H1 (cell line): ENCODE measurements at regions of chr1 and their contacts with region 1.

Region 1: GRCh38 chr1:204763706-204764427 is 78.3 kb upstream of the LRRN2 start:
- DNase-seq: peak; percentile 77 to 89
- H3K4me3 ChIP-seq: no peak overlapping the region
- H3K27ac ChIP-seq: no peak overlapping the region
- H3K4me1 ChIP-seq: peaks cover 0 to 5% (median 2%) of the 10 kb centered on the region in 4 experiments; a peak in 4 of 7 replicates
- H3K27me3 ChIP-seq: no peaks in the 10 kb centered on the region
- CTCF ChIP-seq: peak; percentile 93 to 98 (median 98)
- EP300 ChIP-seq: peak in 1 of 2 experiments; percentile 57; a peak in 1 of 3 replicates
- POLR2A ChIP-seq: no peak
- RAD21 ChIP-seq: peak; percentile 90 to 91

Region 2: GRCh38 chr1:204565617-204566582 is 198.0 kb before region 1 on chr1:
- CTCF ChIA-PET with region 1: interaction called, 42 read pairs
- POLR2A ChIA-PET with region 1: interaction called, 4 read pairs
- DNase-seq: peak in 1 of 2 experiments; percentile 63
- H3K4me3 ChIP-seq: peak overlapping the region in 1 of 4 experiments; percentile 34; a peak in 2 of 8 replicates
- H3K27ac ChIP-seq: peak overlapping the region; percentile 4; the same call in 1 of the 2 replicates
- H3K4me1 ChIP-seq: peaks cover 3 to 24% (median 13%) of the 10 kb centered on the region in 4 experiments; a peak in 6 of 7 replicates
- H3K27me3 ChIP-seq: no peaks in the 10 kb centered on the region; a peak in 1 of 7 replicates
- CTCF ChIP-seq: peak; percentile 36 to 83 (median 73)
- EP300 ChIP-seq: peak in 1 of 2 experiments; percentile 85; a peak in 1 of 3 replicates
- POLR2A ChIP-seq: no peak
- RAD21 ChIP-seq: peak; percentile 84 to 89

Region 3: GRCh38 chr1:204623894-204624361 is 139.9 kb before region 1 on chr1:
- CTCF ChIA-PET with region 1: interaction called, 21 read pairs
- POLR2A ChIA-PET with region 1: no interaction called
- DNase-seq: no peak
- H3K4me3 ChIP-seq: no peak overlapping the region
- H3K27ac ChIP-seq: no peak overlapping the region
- H3K4me1 ChIP-seq: peaks cover 3 to 11% (median 6%) of the 10 kb centered on the region in 4 experiments; a peak in 6 of 7 replicates
- H3K27me3 ChIP-seq: no peaks in the 10 kb centered on the region
- CTCF ChIP-seq: peak; percentile 40 to 81 (median 44)
- EP300 ChIP-seq: no peak
- POLR2A ChIP-seq: no peak
- RAD21 ChIP-seq: peak; percentile 31 to 48; a peak in 3 of 4 replicates

Region 4: DNA sequence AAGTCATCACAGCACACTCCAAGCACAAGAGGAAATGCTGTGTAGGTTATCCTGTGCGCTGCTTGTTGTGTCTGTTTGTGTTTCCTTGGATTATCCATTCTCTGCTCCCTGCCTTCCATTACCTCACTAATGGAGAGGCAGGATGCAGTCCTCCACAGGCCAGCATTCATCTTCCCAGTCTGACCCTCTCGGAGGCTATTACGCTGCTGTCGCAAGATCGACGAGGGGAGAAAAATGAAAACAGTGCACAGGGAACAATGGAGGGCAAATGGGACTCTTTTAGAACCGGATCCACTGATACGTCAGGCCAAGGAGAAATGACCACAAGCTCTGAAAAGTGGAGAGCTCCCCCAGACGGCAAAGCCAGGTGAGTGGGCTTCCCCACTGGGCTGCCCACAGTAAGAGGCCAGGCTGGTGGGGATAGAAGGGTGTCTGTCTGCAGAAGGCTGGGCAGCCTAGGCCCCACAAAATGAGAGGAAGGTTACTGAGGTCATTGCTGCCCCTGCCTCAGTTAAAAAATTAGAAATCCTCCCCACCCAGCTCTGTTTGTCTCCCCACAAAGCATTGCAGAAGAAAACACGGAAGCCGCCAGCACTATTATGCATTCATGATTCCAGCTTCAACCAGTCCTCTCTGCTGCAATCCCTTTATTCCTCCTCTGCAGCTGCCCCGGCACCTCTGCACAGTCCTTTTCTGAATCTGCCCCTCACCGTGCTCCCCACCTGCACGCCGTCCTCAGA is 100.1 kb before region 1 on chr1:
- CTCF ChIA-PET with region 1: interaction called, 12 read pairs
- POLR2A ChIA-PET with region 1: no interaction called
- DNase-seq: no peak
- H3K4me3 ChIP-seq: no peak overlapping the region
- H3K27ac ChIP-seq: no peak overlapping the region
- H3K4me1 ChIP-seq: peaks cover 0 to 2% (median 0%) of the 10 kb centered on the region in 4 experiments; a peak in 2 of 7 replicates
- H3K27me3 ChIP-seq: no peaks in the 10 kb centered on the region; a peak in 2 of 7 replicates
- CTCF ChIP-seq: no peak
- EP300 ChIP-seq: no peak
- POLR2A ChIP-seq: no peak
- RAD21 ChIP-seq: no peak

Region 5: GRCh38 chr1:204706838-204707509 is 56.9 kb before region 1 on chr1:
- CTCF ChIA-PET with region 1: interaction called, 12 read pairs
- POLR2A ChIA-PET with region 1: no interaction called
- DNase-seq: peak in 1 of 2 experiments; percentile 69
- H3K4me3 ChIP-seq: peak overlapping the region in 1 of 4 experiments; percentile 10; a peak in 3 of 8 replicates
- H3K27ac ChIP-seq: no peak overlapping the region
- H3K4me1 ChIP-seq: peaks cover 31 to 43% (median 32%) of the 10 kb centered on the region in 4 experiments
- H3K27me3 ChIP-seq: peaks cover 22 to 55% (median 47%) of the 10 kb centered on the region in 4 experiments
- CTCF ChIP-seq: no peak
- EP300 ChIP-seq: 0 out of 3 replicates have a peak, but pooled peaks of 1 of the 2 experiments have one; percentile 5
- POLR2A ChIP-seq: no peak
- RAD21 ChIP-seq: no peak

Region 6: GRCh38 chr1:204746838-204747442 is 16.9 kb before region 1 on chr1:
- CTCF ChIA-PET with region 1: interaction called, 239 read pairs
- POLR2A ChIA-PET with region 1: interaction called, 3 read pairs
- DNase-seq: peak; percentile 43 to 75
- H3K4me3 ChIP-seq: no peak overlapping the region
- H3K27ac ChIP-seq: no peak overlapping the region
- H3K4me1 ChIP-seq: peaks cover 0 to 6% (median 4%) of the 10 kb centered on the region in 4 experiments; a peak in 5 of 7 replicates
- H3K27me3 ChIP-seq: no peaks in the 10 kb centered on the region
- CTCF ChIP-seq: peak; percentile 80 to 97 (median 82)
- EP300 ChIP-seq: no peak
- POLR2A ChIP-seq: no peak
- RAD21 ChIP-seq: peak; percentile 55 to 65